Cardiac septum (tissue), 1 donor: ENCODE measurements at regions of chr10 and their contacts with region 1.

Region 1: DNA sequence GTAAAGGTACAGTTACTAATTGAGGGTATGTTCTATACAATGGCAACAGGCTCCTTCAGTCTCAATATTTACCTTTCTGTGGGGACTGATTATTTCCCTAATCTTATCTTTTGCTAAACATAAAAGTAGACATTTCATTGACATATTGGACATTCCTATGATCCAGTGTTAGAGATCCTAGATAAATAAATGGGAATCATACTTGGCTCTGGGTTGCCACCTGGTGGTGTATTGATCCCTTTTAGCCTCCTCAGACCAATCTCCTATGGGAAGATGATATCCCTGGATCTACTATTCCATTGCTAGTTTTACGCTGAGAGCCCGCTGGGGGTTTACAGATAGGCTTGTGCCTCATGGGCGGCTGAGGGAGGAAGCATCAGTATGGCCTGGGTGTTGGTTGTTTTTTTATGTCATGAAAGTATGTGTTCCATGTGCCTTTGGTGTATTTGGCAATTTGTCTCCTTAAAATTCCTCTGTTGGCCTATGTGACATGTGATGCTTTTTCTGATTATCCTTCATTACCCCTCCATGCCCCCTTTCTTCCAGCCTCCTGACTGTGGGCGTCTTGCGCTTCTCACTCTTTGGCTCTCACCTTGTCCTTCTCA is 18.8 kb downstream of the CELF2 start:
- DNase-seq: no peak

Region 2: DNA sequence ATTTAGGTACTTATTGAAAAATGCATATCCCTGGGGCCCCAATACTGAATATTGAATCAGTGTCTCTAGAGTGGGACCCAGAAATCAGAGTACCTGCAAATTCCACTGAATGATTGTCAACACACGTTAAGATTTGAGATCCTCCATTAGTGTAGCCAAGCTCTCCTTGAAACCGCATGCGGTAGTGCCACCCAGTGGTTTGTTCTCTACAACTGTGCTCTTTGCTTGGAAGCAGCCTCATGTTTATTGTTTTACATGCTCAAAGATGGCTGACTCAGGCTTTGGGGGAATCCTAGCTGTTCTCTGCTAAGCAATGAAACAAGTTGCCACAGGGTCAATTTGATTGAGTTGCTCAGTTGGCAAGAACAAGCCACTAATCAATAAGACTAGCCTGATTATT is 359.0 kb before region 1 on chr10:
- intact Hi-C with region 1: loop called (anchors 5 kb)
- DNase-seq: no peak

Region 3: DNA sequence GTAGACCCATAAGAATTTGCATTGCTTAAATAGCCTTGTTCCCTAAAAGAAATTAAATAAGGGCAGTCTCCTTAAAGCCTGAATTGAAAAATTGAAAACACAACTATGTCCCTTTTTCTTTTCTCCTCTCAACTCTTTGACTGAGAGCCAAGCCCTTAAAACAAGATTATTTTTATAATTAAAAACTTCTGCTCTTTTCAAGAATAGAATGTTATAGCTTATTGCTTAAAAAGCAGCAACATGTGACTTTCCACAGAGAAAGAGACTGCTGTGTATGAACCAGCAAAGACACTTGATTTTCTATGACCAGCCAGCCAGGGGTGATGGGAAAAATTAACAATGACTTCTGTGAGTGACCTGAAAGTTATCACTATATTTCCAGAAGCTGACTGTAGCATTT is 314.1 kb before region 1 on chr10:
- intact Hi-C with region 1: no loop called
- DNase-seq: no peak

Region 4: GRCh38 chr10:10996966-10997620 is 39.4 kb before region 1 on chr10:
- intact Hi-C with region 1: no loop called
- DNase-seq: no peak